ENCODE measurements at regions of chr9 and their contacts with region 1.

Region 1: DNA sequence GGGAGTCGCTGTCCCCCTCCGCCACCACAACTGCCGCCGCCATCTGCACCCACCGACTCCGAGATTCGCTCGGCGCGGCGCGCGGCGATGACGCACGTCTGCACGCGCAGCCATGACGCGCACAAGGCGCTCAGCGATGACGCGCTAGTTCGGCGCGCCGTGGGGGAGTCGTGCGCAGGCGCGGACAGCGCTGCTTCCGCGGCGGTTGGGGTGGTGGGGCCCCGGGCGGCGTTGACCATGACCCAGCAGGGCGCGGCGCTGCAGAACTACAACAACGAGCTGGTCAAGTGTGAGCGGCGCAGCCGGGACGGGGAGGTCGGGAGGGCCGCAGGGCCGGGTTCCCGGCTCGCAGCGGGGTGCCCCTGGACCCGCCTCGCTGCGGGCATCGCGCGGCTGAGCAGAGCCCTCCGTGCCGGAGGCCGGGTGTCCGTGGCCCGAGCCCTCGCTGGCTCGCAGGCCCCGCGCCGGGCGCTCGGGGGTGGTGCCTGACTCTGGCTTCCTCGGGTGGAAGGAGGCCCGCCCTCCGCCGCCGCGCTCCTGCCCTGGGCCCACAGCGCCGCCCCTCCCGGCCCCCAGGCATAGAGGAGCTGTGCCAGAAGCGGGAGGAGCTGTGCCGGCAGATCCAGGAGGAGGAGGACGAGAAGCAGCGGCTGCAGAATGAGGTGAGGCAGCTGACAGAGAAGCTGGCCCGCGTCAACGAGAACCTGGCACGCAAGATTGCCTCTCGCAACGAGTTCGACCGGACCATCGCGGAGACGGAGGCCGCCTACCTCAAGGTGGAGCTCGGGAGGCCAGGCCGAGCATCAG is at the starts of genes ANAPC2 and SSNA1:
- DNase-seq: peak; percentile 99
- ATAC-seq: peak; percentile 83
- H3K4me3 Mint-ChIP-seq: peak within 1 kb of the TSS; percentile 94
- H3K27ac Mint-ChIP-seq: peak within 1 kb of the TSS; percentile 95
- H3K4me1 Mint-ChIP-seq: peaks cover 16% of the 10 kb centered on the region
- H3K27me3 Mint-ChIP-seq: no peaks in the 10 kb centered on the region
- total RNA-seq, gene ANAPC2: 84.2 to 87.8 TPM
- total RNA-seq, gene SSNA1: 62.4 to 65.2 TPM

Region 2: DNA sequence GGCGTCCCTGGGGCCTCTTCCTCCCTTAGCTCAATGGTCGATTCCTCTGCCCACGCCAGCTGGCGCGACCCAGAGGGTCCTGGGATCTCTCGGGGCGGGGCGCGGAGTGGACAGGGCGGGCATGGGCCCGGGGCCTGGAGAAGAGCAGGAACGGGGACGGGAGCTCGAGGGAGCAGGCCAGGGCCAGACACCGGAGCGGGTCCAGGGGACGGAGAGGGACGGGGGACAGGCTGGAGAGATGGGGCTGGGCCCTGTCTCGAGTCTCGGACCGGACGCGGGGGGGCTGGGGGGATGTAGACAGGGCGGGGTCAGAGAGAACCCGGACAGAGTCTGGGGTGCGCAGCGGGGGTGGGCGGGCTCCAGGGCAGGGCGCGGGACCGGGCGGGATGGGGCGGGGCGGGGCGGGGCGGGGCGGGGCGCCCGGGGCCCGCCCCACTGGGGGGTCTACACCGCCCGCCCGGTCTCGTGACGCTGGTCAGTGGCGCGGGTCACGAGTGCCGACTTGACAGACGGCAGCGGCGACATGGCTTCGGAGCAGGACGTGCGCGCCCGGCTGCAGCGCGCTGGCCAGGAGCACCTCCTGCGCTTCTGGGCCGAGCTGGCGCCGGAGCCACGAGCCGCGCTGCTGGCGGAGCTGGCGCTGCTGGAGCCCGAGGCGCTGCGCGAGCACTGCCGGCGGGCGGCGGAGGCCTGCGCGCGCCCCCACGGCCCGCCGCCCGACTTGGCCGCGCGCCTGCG is 111.5 kb before region 1 on chr9 and contains the start of gene UAP1L1:
- POLR2A ChIA-PET with region 1: no interaction called
- DNase-seq: peak; percentile 81
- ATAC-seq: peak; percentile 70
- H3K4me3 Mint-ChIP-seq: peak within 1 kb of the TSS; percentile 79
- H3K27ac Mint-ChIP-seq: peak within 1 kb of the TSS; percentile 86
- H3K4me1 Mint-ChIP-seq: peaks cover 5% of the 10 kb centered on the region
- H3K27me3 Mint-ChIP-seq: no peaks in the 10 kb centered on the region
- total RNA-seq, gene UAP1L1: 43.9 to 44.1 TPM

Region 3: GRCh38 chr9:137095664-137096517 is 92.8 kb before region 1 on chr9:
- POLR2A ChIA-PET with region 1: interaction called, 15 read pairs
- DNase-seq: peak; percentile 87
- ATAC-seq: peak; percentile 99
- H3K4me3 Mint-ChIP-seq: peak overlapping the region; percentile 85
- H3K27ac Mint-ChIP-seq: peak overlapping the region; percentile 96
- H3K4me1 Mint-ChIP-seq: peaks cover 16% of the 10 kb centered on the region
- H3K27me3 Mint-ChIP-seq: no peaks in the 10 kb centered on the region

Region 4: DNA sequence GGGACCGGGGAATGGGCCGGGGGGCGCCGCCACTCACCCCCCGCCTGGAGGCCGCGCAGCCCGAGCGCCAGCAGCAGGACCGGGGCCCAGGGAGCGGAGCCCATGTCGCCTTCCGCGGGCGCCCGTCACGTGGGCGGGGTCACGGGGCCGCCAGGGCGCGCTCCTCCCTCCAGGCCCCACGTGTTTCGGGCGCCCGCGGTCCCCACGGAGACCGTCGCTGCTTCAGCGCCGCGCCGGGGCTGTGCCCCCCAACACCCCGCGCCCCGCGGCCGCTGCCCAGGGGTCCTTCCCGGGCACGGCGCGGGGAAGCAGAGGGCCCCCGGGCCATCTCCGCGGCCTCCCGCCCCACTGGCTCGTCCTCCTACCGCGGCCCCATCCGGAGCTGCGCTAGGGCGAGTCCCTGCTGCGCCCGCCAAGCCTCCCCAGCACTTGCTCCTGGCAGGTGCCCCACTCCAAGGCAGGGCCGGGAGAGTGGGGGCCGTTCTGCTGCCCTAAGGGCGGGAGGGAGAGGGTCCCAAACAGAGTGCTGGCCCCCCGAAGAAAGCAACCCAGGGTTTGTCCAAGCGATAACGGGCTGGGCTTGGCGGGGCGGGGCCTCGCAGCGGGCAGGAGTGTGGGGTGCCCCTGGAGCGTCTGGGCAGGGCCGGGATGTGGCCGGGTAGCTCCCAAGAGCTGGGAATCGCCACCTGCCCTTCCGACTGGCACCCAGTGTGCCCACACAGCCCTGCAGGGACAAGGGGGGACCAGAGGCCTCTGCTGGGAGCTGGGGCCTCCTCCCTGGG is 73.9 kb before region 1 on chr9 and contains the start of gene DPP7:
- POLR2A ChIA-PET with region 1: interaction called, 11 read pairs
- DNase-seq: peak; percentile 91
- ATAC-seq: peak; percentile 89
- H3K4me3 Mint-ChIP-seq: peak within 1 kb of the TSS; percentile 74
- H3K27ac Mint-ChIP-seq: peak within 1 kb of the TSS; percentile 52
- H3K4me1 Mint-ChIP-seq: peaks cover 3% of the 10 kb centered on the region
- H3K27me3 Mint-ChIP-seq: no peaks in the 10 kb centered on the region
- total RNA-seq, gene DPP7: 314 to 322 TPM

Region 5: DNA sequence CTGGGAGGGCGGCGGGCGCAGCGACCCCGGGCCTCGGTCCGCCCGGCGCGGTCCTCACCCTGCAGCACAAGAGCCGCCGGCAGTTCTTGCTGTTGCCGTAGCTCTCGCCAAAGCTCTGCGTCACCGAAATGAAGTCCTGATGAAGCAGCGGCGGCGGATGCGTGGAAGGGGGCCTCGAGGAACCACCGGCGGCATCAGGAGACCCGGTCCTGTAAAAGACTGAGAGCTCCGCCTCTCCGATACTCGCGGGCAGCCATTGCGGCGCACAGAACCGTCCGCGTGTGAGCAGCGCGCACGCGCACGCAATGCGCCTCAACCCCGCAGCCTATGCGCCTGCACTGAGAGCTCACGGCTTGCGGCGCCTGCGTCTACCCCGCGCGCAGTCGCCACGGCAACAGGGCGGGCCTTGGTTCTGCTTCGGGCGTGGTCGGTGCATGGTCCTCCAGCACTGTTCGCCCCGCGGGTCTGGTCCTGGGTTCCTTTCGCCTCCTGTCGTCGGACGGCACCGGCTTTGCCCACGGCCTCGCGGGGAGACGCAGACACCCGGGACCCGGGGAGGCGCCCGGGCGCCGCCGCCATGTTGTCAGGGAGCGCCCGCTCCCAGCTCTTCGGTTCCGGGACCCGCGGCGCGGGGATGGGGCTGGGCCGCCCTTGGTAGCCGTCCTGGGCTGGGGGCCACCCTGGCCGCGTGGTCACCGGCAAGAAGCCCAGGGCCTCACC is 59.1 kb before region 1 on chr9:
- POLR2A ChIA-PET with region 1: interaction called, 37 read pairs
- DNase-seq: peak; percentile 90
- ATAC-seq: peak; percentile 96
- H3K4me3 Mint-ChIP-seq: peak overlapping the region; percentile 89
- H3K27ac Mint-ChIP-seq: peak overlapping the region; percentile 78
- H3K4me1 Mint-ChIP-seq: peaks cover 26% of the 10 kb centered on the region
- H3K27me3 Mint-ChIP-seq: peaks cover 17% of the 10 kb centered on the region

Region 6: DNA sequence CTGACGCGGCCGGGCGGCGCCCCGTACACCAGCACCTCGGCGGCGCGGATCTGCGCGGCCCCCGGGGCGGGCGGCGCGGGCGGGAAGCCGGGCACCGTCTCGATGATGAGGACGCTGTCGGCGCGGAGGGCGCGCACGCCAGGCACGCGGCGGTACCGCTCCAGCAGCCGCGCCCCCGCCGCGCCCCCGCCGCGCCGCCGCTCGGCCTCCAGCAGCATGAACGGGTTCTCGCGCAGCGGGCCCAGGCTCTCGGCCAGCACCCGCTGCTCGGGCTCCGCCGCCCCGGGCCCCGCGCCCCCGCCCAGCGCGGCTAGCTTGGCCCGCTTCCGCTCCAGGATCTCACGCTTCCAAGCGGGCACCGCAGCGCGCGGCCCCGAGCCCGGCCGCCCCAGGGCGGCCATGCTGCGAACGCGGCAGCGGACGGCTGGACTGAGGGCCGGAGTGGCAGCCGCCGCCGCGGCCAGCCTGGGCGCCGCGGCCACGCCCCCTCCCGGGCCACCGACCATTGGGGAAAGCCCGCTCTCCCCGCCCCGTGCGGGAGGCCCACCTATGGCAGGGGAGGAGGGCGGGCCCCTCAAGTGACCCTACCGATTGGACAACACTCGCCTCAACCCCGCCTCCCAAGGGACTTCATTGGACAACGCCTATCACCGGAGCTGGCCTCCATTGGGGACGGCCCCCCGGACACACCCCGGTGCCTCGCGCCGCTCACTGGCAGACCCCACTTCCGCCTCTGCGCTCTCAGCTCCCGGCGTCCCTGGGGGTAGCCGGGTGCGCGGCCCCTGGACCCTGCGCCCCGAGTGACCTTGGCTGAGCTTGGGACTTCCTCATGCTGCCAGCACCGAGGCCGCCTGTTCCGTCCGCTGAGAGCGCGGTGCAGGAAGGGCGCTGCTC is 11.9 kb after region 1 on chr9 and contains the start of gene TPRN:
- POLR2A ChIA-PET with region 1: interaction called, 42 read pairs
- DNase-seq: peak; percentile 95
- ATAC-seq: peak; percentile 95
- H3K4me3 Mint-ChIP-seq: peak within 1 kb of the TSS; percentile 84
- H3K27ac Mint-ChIP-seq: peak within 1 kb of the TSS; percentile 86
- H3K4me1 Mint-ChIP-seq: peaks cover 20% of the 10 kb centered on the region
- H3K27me3 Mint-ChIP-seq: no peaks in the 10 kb centered on the region
- total RNA-seq, gene TPRN: 11.2 to 14.7 TPM

Region 7: GRCh38 chr9:137223078-137223970 is 34.6 kb after region 1 on chr9:
- POLR2A ChIA-PET with region 1: interaction called, 33 read pairs
- DNase-seq: peak; percentile 98
- ATAC-seq: peak; percentile 87
- H3K4me3 Mint-ChIP-seq: peak overlapping the region; percentile 84
- H3K27ac Mint-ChIP-seq: peak overlapping the region; percentile 82
- H3K4me1 Mint-ChIP-seq: peaks cover 7% of the 10 kb centered on the region
- H3K27me3 Mint-ChIP-seq: peaks cover 2% of the 10 kb centered on the region

Measured in activated naive CD8-positive, alpha-beta T cell treated with anti-CD3 and anti-CD28 coated beads, Interleukin-2, amount 10 ng/mL, durations not matched to agents 7 days and 5 days (primary cell).